CD4-positive, alpha-beta memory T cell (primary cell): ENCODE measurements at regions of chr1 and their contacts with region 1.

Region 1: DNA sequence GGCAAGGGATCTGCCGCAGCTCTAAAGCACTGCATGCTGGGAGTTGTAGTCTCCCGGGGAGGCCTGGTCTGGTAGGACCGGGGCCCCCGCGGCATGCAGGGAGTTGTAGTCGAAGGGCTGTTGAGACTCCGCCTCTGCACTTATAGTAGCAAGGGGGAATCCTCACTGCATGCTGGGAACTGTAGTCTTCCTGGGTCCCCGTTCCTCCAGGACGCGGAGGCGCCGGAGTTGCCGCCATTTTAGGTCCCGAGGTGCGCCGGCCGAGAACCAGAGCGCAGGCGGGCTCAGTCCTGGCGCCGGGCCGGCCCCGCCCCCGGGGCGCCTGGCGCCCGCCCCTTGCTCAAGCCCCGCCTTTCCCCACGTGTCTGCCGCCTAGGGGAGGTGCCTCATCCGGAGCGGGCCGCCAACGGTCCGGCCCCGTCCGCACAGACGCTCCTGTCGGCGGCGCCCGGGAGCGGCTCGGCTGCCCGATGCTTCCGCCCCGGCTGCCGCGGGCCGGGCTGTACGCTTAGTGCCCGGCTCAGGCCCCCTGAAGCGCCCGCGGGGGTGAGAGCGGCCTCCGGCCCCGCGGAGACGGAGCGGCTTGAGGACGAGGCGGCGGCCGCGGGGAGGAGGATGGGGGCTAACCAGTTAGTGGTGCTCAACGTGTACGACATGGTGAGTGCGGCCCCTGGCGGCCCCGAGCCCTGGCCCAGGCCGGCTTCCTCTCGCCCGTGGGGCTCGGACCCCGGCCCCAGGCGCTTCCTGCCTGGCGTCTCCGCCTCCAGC is at the start of gene DESI2:
- DNase-seq: peak; percentile 97 to 100 (median 99)
- H3K4me3 ChIP-seq: peak within 1 kb of the TSS; percentile 61 to 73
- H3K4me3 Mint-ChIP-seq: peak within 1 kb of the TSS; percentile 80 to 91 (median 86)
- H3K27ac ChIP-seq: peak within 1 kb of the TSS; percentile 89
- H3K27ac Mint-ChIP-seq: peak within 1 kb of the TSS; percentile 43 to 95 (median 93)
- H3K4me1 ChIP-seq: peaks cover 43% of the 10 kb centered on the region
- H3K4me1 Mint-ChIP-seq: peaks cover 21 to 24% (median 22%) of the 10 kb centered on the region in 4 donors
- H3K27me3 ChIP-seq: no peaks in the 10 kb centered on the region
- H3K27me3 Mint-ChIP-seq: no peaks in the 10 kb centered on the region
- total RNA-seq, gene DESI2: 21.1 to 22.8 TPM

Region 2: GRCh38 chr1:244451951-244452795 is 200.7 kb before region 1 on chr1:
- CTCF ChIA-PET with region 1: no interaction called
- POLR2A ChIA-PET with region 1: no interaction called
- intact Hi-C with region 1: loop called (anchors 1 kb)
- DNase-seq: peak; percentile 98 to 99 (median 99)
- H3K4me3 ChIP-seq: peak overlapping the region in 1 of 2 donors; percentile 95
- H3K4me3 Mint-ChIP-seq: peak overlapping the region; percentile 87 to 97 (median 92)
- H3K27ac ChIP-seq: peak overlapping the region; percentile 94
- H3K27ac Mint-ChIP-seq: peak overlapping the region; percentile 87 to 100 (median 95)
- H3K4me1 ChIP-seq: peaks cover 39% of the 10 kb centered on the region
- H3K4me1 Mint-ChIP-seq: peaks cover 31 to 48% (median 35%) of the 10 kb centered on the region in 4 donors
- H3K27me3 ChIP-seq: no peaks in the 10 kb centered on the region
- H3K27me3 Mint-ChIP-seq: no peaks in the 10 kb centered on the region

Region 3: GRCh38 chr1:244599937-244600350 is 52.9 kb before region 1 on chr1:
- CTCF ChIA-PET with region 1: interaction called, 10 read pairs
- POLR2A ChIA-PET with region 1: interaction called, 3 read pairs
- intact Hi-C with region 1: loop called (anchors 1 kb)
- DNase-seq: peak; percentile 18 to 72 (median 33)
- H3K4me3 ChIP-seq: no peak overlapping the region
- H3K4me3 Mint-ChIP-seq: peak overlapping the region in 6 of 8 donors; percentile 28 to 78 (median 58)
- H3K27ac ChIP-seq: no peak overlapping the region
- H3K27ac Mint-ChIP-seq: peak overlapping the region; percentile 78 to 94 (median 86)
- H3K4me1 ChIP-seq: peaks cover 3% of the 10 kb centered on the region
- H3K4me1 Mint-ChIP-seq: peaks cover 3 to 11% (median 10%) of the 10 kb centered on the region in 4 donors
- H3K27me3 ChIP-seq: no peaks in the 10 kb centered on the region
- H3K27me3 Mint-ChIP-seq: peaks cover 1 to 2% of the 10 kb centered on the region in 2 donors

Region 4: DNA sequence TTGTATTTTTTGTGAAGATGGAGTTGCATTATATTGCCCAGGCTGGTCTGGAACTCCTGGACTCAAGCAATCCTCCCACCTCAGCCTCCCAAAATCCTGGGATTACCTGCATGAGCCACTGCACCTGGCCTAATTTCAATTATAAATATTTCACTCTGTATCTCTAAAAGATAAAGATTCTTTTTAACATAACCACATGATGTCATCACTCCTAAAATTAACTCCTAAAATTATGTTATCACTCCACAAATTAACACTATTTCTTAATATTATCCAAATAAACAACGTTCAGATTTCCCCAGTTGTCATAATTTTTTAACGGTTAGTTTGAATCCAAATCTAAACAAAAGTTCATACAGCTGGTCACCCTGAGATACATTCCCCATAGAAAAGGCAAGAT is 43.1 kb after region 1 on chr1:
- CTCF ChIA-PET with region 1: no interaction called
- POLR2A ChIA-PET with region 1: no interaction called
- intact Hi-C with region 1: no loop called
- DNase-seq: no peak
- H3K4me3 ChIP-seq: no peak overlapping the region
- H3K4me3 Mint-ChIP-seq: no peak overlapping the region
- H3K27ac ChIP-seq: no peak overlapping the region
- H3K27ac Mint-ChIP-seq: no peak overlapping the region
- H3K4me1 ChIP-seq: no peaks in the 10 kb centered on the region
- H3K4me1 Mint-ChIP-seq: peaks cover 0 to 4% (median 0%) of the 10 kb centered on the region in 4 donors
- H3K27me3 ChIP-seq: no peaks in the 10 kb centered on the region
- H3K27me3 Mint-ChIP-seq: no peaks in the 10 kb centered on the region

Region 5: DNA sequence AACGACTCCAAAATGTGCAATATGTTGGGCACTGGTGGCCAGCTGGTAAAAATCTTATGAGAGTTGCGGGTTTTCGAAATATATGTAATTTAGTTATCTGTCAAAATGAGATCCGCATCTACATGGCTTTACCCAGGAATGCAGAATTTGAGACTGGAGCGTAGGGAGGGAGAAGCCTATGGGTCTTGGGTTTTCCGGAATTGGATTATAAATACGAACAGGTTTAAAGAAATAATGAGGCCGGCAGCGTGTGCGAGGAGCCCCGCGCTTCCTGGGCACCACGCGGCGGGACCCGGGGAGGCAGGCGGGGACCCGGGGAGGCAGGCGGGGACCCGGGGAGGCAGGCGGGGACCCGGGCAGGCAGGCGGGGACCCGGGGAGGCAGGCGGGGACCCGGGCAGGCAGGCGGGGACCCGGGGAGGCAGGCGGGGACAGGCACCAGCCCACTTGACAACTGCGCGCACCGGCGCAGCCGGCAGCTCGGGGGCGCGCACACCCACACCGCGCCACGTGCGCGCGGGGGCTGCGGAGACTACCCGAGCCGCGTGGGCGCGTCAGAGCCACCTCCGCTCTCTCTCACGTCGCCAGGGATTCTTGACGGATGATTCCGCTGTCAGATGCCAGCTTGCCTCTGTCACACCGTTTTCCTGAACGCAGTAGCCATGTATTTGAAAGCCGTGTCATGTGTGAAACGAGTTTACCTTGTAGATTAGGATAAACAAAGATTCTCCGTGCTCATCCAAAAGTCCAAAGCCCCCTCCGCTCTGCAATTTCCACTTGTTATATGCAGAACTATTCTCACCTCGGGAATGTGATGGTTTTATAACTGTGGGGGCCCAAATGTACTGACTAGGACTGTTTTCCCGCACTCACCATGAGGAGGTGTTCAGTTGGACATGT is 265.8 kb after region 1 on chr1:
- CTCF ChIA-PET with region 1: no interaction called
- POLR2A ChIA-PET with region 1: no interaction called
- intact Hi-C with region 1: loop called (anchors 2 kb)
- DNase-seq: peak; percentile 54 to 79 (median 78)
- H3K4me3 ChIP-seq: peak overlapping the region; percentile 36 to 64
- H3K4me3 Mint-ChIP-seq: peak overlapping the region; percentile 78 to 94 (median 91)
- H3K27ac ChIP-seq: no peak overlapping the region
- H3K27ac Mint-ChIP-seq: peak overlapping the region; percentile 54 to 91 (median 85)
- H3K4me1 ChIP-seq: peaks cover 7% of the 10 kb centered on the region
- H3K4me1 Mint-ChIP-seq: peaks cover 4 to 16% (median 11%) of the 10 kb centered on the region in 4 donors
- H3K27me3 ChIP-seq: no peaks in the 10 kb centered on the region
- H3K27me3 Mint-ChIP-seq: peaks cover 4 to 7% of the 10 kb centered on the region in 2 donors